ENCODE measurements at regions of chr18 and their contacts with region 1.

Region 1: GRCh38 chr18:58541789-58542425 is 87.0 kb downstream of the ALPK2 start:
- DNase-seq: peak; percentile 79
- ATAC-seq: peak; percentile 79
- H3K4me3 Mint-ChIP-seq: no peak overlapping the region
- H3K27ac Mint-ChIP-seq: peak overlapping the region; percentile 79
- H3K4me1 Mint-ChIP-seq: peaks cover 90% of the 10 kb centered on the region
- H3K27me3 Mint-ChIP-seq: peaks cover 5% of the 10 kb centered on the region

Region 2: GRCh38 chr18:57004366-57005121 is 1537.4 kb before region 1 on chr18:
- CTCF ChIA-PET with region 1: no interaction called
- POLR2A ChIA-PET with region 1: no interaction called
- intact Hi-C with region 1: loop called in 1 of 2 experiments (anchors 5 kb)
- DNase-seq: no peak
- ATAC-seq: peak; percentile 96
- H3K4me3 Mint-ChIP-seq: no peak overlapping the region
- H3K27ac Mint-ChIP-seq: peak overlapping the region; percentile 77
- H3K4me1 Mint-ChIP-seq: peaks cover 34% of the 10 kb centered on the region
- H3K27me3 Mint-ChIP-seq: no peaks in the 10 kb centered on the region

Region 3: DNA sequence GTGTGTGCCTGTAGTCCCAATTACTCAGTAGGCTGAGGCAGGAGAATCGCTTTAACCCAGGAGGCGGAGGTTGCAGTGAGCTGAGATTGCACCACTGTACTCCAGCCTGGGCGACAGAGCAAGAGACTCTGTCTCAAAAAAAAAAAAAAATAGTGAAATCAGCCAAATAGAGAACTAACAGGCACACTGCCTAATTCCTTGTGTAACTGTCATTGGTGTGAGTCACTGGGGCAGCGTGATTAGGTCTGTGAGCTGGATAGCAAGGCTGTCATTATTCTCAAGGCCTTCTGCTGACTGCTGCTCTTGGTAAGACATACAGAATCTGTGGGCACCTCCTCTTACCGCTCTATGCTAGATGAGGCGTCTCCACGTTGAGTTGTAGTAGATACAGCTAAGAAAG is 227.6 kb before region 1 on chr18:
- CTCF ChIA-PET with region 1: no interaction called
- POLR2A ChIA-PET with region 1: no interaction called
- intact Hi-C with region 1: no loop called
- DNase-seq: no peak
- ATAC-seq: no peak
- H3K4me3 Mint-ChIP-seq: no peak overlapping the region
- H3K27ac Mint-ChIP-seq: no peak overlapping the region
- H3K4me1 Mint-ChIP-seq: peaks cover 61% of the 10 kb centered on the region
- H3K27me3 Mint-ChIP-seq: no peaks in the 10 kb centered on the region

Region 4: DNA sequence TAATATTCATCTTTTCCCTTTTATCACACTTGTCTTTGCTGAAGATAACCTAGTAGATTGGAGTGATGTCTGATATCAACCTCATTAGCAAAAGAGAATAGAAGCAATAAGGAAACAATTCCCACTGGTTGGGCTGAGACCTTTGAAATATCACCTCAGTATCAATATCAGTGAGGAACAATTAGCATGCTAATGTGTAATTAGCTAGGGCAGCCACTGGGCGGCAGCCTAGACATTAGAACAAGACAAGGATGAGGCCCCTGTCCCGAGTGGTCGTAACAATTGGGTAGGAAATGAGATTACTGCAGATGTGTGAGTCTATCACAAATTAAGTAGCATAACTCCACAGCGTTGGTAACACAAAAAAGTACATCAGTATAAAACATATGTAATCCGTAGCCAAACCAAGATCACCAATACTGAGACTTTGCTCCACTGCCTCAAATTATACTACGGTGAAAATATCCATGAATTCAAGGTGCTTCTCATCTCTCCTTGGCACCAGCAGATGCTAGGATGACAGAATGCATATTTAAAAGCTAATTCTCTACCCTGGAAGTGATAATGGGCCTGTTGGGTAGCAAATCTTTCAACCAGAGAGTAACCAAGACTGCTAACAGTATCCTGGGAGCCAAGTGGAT is 12.1 kb before region 1 on chr18:
- CTCF ChIA-PET with region 1: interaction called, 15 read pairs
- POLR2A ChIA-PET with region 1: interaction called, 3 read pairs
- intact Hi-C with region 1: no loop called
- DNase-seq: peak; percentile 83
- ATAC-seq: peak; percentile 39
- H3K4me3 Mint-ChIP-seq: no peak overlapping the region
- H3K27ac Mint-ChIP-seq: no peak overlapping the region
- H3K4me1 Mint-ChIP-seq: peaks cover 30% of the 10 kb centered on the region
- H3K27me3 Mint-ChIP-seq: peaks cover 13% of the 10 kb centered on the region

Region 5: GRCh38 chr18:58615140-58616132 is 73.5 kb after region 1 on chr18:
- CTCF ChIA-PET with region 1: no interaction called
- POLR2A ChIA-PET with region 1: no interaction called
- intact Hi-C with region 1: loop called (anchors 1 kb)
- DNase-seq: peak; percentile 87
- ATAC-seq: peak; percentile 95
- H3K4me3 Mint-ChIP-seq: peak overlapping the region; percentile 30
- H3K27ac Mint-ChIP-seq: peak overlapping the region; percentile 91
- H3K4me1 Mint-ChIP-seq: peaks cover 46% of the 10 kb centered on the region
- H3K27me3 Mint-ChIP-seq: peaks cover 8% of the 10 kb centered on the region

Region 6: GRCh38 chr18:58699551-58699950 is 157.6 kb after region 1 on chr18:
- CTCF ChIA-PET with region 1: interaction called, 3 read pairs
- POLR2A ChIA-PET with region 1: interaction called, 4 read pairs
- intact Hi-C with region 1: loop called in 1 of 2 experiments (anchors 1 kb)
- DNase-seq: peak; percentile 39
- ATAC-seq: no peak
- H3K4me3 Mint-ChIP-seq: no peak overlapping the region
- H3K27ac Mint-ChIP-seq: no peak overlapping the region
- H3K4me1 Mint-ChIP-seq: peaks cover 33% of the 10 kb centered on the region
- H3K27me3 Mint-ChIP-seq: no peaks in the 10 kb centered on the region

Region 7: DNA sequence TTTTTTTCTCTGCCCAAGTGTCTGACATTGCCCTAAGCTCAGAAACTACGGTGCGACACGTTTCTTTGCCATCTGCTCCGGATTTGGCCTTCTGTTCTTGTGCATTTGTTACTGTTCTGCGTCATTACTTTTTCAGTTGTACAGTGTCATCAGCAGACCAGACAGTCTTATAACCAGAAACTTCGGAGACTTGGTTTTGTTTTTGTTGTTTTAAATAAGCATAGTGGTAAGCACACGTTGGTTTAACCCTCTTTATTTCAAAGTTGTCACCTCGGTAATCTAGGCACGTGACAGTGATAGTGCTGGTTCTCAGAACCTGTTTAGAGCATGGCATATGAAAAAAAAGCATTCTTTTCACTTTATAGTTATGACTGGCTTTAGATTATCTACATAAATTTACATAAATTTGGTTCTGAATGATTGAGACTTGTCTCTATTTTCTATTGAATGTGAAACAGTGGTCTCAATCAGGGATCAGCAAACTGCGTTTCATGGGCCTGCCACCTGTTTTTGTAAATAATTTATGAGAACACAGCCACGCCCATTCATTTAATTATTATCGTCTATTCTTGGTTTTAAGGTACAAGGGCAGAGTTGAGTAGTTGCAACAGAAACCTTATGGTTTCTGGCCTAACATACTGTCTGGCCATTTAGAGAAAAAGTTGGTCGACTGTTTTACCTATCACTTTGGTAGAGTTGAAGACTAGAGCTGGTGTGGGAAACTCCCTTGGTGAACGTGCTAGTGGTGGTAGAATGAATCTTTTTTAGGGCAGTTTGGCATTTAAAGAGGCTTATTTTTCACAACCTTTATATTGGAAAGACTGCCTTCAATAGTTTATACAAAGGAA is 429.3 kb after region 1 on chr18:
- CTCF ChIA-PET with region 1: no interaction called
- POLR2A ChIA-PET with region 1: no interaction called
- intact Hi-C with region 1: no loop called
- DNase-seq: no peak
- ATAC-seq: no peak
- H3K4me3 Mint-ChIP-seq: no peak overlapping the region
- H3K27ac Mint-ChIP-seq: no peak overlapping the region
- H3K4me1 Mint-ChIP-seq: no peaks in the 10 kb centered on the region
- H3K27me3 Mint-ChIP-seq: peaks cover 14% of the 10 kb centered on the region

Region 8: GRCh38 chr18:59035591-59035990 is 493.7 kb after region 1 on chr18:
- CTCF ChIA-PET with region 1: no interaction called
- POLR2A ChIA-PET with region 1: interaction called, 9 read pairs
- intact Hi-C with region 1: loop called (anchors 2 to 5 kb)
- DNase-seq: no peak
- ATAC-seq: no peak
- H3K4me3 Mint-ChIP-seq: no peak overlapping the region
- H3K27ac Mint-ChIP-seq: no peak overlapping the region
- H3K4me1 Mint-ChIP-seq: peaks cover 20% of the 10 kb centered on the region
- H3K27me3 Mint-ChIP-seq: peaks cover 9% of the 10 kb centered on the region

Region 9: DNA sequence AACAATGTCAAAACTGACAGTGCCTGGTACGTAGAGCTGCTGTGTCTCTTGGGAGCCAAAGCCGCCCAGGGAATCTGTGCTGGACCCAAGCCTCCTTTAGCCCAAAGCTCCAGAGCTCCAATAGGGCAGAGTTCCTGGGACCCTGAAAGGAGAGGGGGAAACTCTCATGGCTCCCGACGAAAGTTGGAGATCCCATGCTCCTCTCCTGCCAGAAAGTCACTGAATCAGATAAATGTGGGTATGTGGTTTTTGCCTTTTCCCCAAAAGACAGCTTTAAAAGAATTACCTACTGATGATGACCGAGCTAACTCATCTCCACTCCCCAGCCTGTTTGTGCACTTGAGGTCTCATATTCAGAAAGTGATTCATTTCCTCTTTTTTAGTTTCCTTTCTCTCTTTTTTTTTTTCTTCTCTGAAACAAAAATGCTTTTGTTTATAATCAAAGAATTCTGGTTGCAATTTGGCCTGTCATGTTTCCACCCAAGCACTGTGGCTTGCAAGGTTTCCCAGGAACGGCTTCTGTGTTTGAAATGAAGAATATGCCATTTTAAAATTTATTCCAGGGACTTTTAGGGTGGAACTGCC is 1343.8 kb after region 1 on chr18:
- CTCF ChIA-PET with region 1: no interaction called
- POLR2A ChIA-PET with region 1: no interaction called
- intact Hi-C with region 1: loop called in 1 of 2 experiments (anchors 5 kb)
- DNase-seq: peak; percentile 56
- ATAC-seq: peak; percentile 79
- H3K4me3 Mint-ChIP-seq: peak overlapping the region; percentile 26
- H3K27ac Mint-ChIP-seq: peak overlapping the region; percentile 74
- H3K4me1 Mint-ChIP-seq: peaks cover 39% of the 10 kb centered on the region
- H3K27me3 Mint-ChIP-seq: no peaks in the 10 kb centered on the region